Head of caudate nucleus (tissue), 42 donors: ENCODE measurements at regions of chr4 and their contacts with region 1.

Region 1: GRCh38 chr4:10164877-10165283 is 48.3 kb upstream of the WDR1 start:
- DNase-seq: peak in 41 of 42 donors; percentile 10 to 84 (median 54)

Region 2: DNA sequence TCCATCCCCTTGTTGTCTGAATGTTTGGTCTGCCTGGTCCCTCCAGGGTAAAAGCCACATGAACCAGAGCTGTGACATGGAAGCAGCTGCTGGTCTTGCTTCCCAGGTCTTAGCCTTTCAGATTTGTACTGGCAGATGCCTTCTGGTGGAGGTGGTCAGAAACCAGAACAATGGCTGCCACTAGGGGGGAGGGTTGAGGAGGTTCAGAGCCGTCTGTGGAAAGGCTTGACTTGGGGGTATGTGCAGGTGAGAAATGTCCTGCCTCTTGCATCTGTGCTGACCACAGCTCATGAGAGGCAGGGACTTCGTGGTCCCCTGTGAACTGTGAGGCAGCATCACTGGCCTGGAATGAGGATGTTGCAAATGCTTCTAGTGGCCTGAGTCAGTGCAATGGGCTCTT is 95.9 kb after region 1 on chr4:
- intact Hi-C with region 1: no loop called
- DNase-seq: no peak

Region 3: DNA sequence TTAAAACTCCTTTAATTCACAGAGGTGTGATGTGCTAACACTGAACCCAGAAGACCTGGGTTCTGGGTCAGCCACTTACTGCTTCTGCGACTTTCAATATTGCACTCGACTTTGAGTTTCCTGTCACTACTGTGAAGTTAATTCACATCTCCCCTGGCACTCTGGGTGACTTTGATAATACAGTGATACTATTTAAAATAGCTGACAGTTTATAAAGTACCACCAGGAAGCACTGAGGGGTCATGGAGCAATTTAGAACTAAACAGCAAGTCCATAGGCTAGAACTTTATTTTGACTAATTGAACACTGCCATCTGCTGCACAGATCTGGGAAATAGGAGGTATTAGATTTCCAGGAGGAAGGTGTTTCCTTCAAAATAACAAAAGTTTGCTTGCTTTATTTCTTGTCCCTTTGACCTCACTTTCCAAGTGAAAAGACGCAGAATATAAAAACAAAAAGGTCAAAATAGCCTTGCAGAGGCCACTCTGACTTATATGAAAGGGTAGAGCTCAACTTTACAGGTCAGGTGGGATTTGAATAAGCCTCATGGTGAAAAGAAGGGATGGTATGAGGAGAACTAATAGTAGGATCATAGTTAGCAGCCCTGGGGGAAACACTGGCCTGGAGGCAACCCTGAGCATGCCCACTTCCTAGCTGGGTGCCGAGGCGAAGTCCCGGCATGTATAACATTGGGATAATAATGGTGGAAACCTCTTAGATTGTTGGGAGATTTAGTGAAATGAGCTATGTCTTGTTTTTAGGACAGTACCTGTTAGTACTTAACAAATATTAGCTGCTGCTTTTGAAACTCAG is 239.0 kb after region 1 on chr4:
- intact Hi-C with region 1: loop called (anchors 10 kb)
- DNase-seq: peak in 19 of 42 donors; percentile 15 to 79 (median 41)

Region 4: DNA sequence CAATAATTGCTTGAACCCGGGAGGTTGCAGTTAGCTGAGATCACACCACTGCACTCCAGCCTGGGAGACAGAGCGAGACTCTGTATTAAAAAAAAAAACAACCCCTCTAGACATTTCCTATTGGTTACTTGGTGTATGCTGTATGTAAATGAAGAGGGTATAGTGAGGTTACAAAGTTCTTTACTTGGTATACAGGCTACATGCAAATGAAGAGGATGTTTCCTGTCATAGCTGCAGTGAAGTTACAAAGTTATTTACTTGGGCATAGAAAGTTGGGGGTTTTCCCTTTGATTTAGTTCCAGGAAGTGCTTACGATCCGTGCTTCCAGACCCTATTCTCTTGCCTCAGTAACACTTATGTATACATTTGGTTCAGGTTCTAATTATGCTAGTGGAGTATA is 558.1 kb after region 1 on chr4:
- intact Hi-C with region 1: no loop called
- DNase-seq: no peak

Region 5: GRCh38 chr4:11053601-11054220 is 888.8 kb after region 1 on chr4:
- intact Hi-C with region 1: no loop called
- DNase-seq: no peak